ENCODE measurements at regions of chr6 and their contacts with region 1.

Region 1: DNA sequence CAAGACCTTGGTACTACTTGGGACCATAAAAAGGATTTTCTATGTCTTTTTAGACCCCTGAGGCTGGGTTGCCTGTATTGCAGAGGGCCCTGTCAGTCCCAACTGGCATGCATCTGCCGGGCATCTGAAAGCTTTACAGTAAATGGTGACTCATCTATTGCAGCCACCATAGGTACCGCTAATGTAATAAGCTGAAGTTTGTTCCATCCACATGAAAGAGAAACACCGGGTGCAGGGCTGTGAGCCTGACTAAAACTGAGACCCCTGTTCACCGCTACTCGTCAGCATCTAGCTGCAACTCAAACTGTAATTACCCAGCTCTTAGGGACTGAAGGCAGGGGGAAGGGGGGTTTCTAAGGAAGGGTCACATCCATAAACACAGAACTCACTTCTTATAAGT is 49.5 kb downstream of the TRERF1 start:
- DNase-seq: peak; percentile 66
- H3K4me3 Mint-ChIP-seq: peak overlapping the region; percentile 68
- H3K27ac Mint-ChIP-seq: peak overlapping the region; percentile 87
- H3K4me1 Mint-ChIP-seq: peaks cover 82% of the 10 kb centered on the region
- H3K27me3 Mint-ChIP-seq: no peaks in the 10 kb centered on the region

Region 2: GRCh38 chr6:42423244-42423643 is 21.1 kb after region 1 on chr6:
- intact Hi-C with region 1: loop called (anchors 2 kb)
- DNase-seq: peak; percentile 21
- H3K4me3 Mint-ChIP-seq: peak overlapping the region; percentile 27
- H3K27ac Mint-ChIP-seq: peak overlapping the region; percentile 6
- H3K4me1 Mint-ChIP-seq: peaks cover 79% of the 10 kb centered on the region
- H3K27me3 Mint-ChIP-seq: no peaks in the 10 kb centered on the region

Measured in activated T-helper 1 cell treated with anti-CD3 and anti-CD28 coated beads, Interleukin-12 subunit alpha, Interleukin-12 subunit beta, Interleukin-2, Interleukin-4 antibody, amounts not matched to agents 30 ng/mL and 10 ng/mL and 1 ng/mL, durations not matched to agents 14 hours and 24 hours and 36 hours (primary cell).